ENCODE measurements at regions of chr19 and their contacts with region 1.

Region 1: GRCh38 chr19:7293795-7294570 is at the start of gene INSR:
- DNase-seq: peak; percentile 62 to 95
- H3K4me3 ChIP-seq: peak within 1 kb of the TSS; percentile 94 to 99
- H3K27ac ChIP-seq: peak within 1 kb of the TSS; percentile 95 to 96
- H3K4me1 ChIP-seq: peaks cover 5% of the 10 kb centered on the region in 2 donors
- H3K27me3 ChIP-seq: no peaks in the 10 kb centered on the region
- CTCF ChIP-seq: no peak
- total RNA-seq, gene INSR: 39.3 TPM

Region 2: DNA sequence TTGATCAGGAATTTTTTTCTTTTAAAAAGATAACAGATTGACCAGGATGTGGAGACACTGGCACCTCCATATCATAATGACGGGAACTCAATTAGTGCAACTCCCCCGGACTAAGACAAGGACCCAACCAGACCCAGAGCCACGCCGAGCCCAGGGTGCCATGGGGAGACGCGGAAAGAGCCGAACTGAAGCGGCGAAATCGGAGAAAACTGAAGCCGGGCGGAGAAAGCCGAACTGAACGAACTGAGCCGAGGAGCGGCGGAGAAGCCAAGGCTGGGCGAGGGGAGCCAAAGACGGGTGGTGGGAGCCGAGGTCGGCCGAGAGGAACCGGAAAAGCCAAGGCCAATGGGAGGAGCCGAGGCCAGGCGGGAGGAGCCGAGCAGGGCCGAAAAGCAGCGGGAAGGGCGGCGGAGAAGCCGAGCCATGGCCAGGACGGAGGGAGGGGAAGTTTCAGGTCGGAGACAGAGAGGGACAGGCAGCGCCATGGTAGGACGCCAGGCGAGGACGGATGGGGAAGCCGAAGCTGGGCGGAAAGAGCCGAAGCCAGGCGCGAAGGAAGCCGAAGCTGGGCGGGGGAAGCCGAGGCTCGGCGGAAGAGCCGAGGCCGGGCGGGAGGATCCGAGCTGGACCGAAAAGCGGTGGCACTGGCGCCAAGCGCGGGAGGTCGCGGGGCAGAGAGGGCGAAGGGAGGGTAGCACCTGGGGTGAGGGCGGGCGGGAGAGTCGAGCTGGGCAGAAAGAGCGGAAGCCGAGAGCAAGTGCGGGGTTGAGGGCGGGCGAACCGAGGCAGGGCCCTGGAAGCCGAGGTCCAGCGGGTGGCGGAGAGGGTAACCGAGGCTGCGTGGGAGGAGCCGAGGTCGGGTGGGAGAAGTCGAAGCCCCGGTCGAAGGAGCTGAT is 195.0 kb before region 1 on chr19:
- intact Hi-C with region 1: loop called (anchors 1 kb)
- DNase-seq: peak; percentile 59 to 92
- H3K4me3 ChIP-seq: peak overlapping the region; percentile 67 to 70
- H3K27ac ChIP-seq: peak overlapping the region; percentile 89 to 91
- H3K4me1 ChIP-seq: peaks cover 0 to 2% of the 10 kb centered on the region in 2 donors
- H3K27me3 ChIP-seq: no peaks in the 10 kb centered on the region
- CTCF ChIP-seq: no peak

Region 3: DNA sequence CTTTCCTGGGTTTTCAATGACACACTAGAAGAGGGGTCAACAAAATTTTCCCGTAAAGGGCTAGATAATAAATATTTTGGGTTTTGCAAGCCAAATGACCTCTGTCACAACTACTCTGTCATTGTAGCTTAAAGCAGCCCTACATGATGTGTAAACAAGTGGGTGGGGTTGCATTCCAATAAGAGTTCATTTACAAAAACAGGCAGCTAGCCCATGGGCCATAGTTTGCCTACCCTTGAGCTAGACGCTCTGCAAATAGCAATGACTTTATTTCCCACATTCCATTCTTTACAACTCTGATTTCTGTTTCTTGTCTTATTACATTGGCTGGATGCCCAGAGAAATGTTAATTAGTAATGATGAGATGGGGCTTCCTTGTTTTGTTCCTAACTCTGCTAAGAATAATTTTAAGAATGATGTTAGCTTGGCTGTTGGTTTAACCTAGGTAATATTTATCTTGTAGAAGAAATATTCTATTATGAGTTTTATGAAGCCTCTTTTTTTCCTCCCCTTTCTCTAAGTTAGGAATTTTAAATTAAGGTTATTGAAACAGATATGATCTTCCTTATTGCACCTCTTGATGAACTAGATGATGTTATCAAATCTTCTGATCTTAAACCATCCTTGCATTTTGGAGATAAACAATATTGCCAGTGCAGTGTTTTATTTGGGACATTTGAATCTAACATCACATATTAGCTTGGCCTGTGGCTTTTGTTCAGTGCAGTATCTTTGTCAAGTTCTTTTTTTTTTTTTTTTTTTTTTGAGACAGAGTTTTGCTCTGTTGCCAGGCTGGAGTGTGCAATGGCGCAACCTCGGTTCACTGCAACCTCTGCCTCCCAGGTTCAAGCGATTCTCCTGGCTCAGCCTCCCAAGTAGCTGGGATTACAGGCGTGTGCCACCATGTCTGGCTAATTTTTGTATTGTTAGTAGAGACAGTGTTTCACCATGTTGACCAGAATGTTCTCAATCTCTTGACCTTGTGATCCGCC is 148.2 kb before region 1 on chr19:
- intact Hi-C with region 1: loop called (anchors 2 kb)
- DNase-seq: no peak
- H3K4me3 ChIP-seq: no peak overlapping the region
- H3K27ac ChIP-seq: no peak overlapping the region
- H3K4me1 ChIP-seq: no peaks in the 10 kb centered on the region
- H3K27me3 ChIP-seq: no peaks in the 10 kb centered on the region
- CTCF ChIP-seq: no peak

Region 4: DNA sequence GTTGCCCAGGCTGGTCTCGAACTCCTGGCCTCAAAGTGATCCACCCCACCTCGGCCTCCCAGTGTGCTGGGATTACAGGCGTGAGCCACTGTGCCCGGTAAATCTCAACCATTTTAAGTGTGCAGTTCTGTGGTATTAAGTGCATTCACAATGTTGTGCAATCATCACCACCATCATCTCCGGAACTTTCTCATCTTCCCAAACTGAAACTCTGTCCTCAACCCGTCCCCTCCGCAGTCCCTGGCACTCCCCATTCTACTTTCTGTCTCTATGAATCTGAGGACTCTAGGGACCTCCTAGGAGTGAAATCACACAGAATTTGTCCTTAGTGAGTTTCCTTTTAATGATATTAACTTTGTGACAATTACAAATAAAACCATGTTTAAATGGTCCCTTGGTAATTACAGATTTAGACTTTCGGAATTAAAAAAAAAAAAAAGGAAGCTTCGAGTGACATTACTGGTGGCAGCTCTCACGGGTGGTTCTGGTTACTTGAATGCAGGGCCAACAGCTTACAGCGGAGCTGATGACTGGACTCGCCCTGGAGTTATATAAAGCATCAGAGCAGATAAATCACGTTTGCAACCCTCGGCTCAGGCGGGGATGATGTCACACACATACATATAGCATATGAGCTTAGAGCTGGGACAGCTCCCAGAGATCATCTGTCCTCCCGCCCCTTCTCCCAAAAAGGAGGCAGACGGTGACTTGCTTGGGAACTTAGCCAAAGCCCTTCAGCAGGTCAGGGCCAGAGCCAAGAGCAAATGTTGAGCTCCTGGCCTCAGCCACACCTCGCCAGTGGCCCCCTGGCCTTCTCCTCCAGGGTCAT is 134.7 kb before region 1 on chr19:
- intact Hi-C with region 1: loop called (anchors 2 kb)
- DNase-seq: peak; percentile 89 to 94
- H3K4me3 ChIP-seq: no peak overlapping the region
- H3K27ac ChIP-seq: peak overlapping the region; percentile 87 to 89
- H3K4me1 ChIP-seq: peaks cover 0 to 10% of the 10 kb centered on the region in 2 donors
- H3K27me3 ChIP-seq: no peaks in the 10 kb centered on the region
- CTCF ChIP-seq: no peak

Region 5: DNA sequence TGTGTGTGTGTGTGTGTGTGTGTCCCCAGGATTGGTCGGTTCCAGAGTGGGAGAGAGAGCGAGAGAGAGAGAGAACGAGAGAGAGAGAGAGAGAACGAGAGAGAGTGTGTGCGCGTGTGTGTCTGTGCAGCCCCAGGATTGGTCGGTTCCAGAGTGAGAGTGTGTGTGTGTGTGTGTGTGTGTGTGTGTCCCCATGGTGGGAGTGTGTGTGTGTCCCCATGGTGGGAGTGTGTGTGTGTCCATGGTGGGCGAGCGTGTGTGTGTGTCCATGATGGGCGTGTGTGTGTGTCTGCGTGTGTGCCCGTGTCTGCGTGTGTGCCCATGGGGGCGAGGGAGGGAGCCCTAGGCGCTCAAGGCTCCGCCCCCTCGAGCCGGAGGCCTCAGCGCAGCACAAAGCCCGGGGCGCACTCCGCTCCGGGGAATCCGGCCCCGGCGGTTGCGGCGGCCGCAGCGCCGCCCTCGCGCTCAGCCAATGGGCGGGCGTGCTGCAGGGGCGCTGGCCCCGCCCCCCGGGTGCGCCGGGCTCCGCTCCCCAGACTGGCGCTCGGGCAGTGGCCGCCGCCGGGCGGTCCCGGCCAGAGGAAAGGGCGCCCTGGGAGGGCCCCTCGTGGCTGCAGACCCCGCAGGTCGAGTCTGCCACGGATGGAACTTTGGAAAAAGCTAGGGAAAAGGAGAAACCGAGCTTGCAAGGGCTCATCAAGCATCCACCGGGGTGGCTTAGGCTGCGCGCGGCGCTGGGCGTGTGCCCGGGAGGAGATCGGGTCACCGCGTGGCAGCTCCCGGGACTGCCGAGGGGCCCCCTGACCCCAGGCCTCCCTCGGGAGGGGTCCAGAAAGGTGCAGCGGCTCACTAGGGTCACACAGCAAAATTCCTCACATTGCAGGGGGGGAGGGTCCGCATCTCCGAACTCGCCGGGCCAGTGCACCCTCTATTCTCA is 96.0 kb before region 1 on chr19:
- intact Hi-C with region 1: loop called (anchors 1 kb)
- DNase-seq: peak; percentile 77 to 96
- H3K4me3 ChIP-seq: peak overlapping the region; percentile 81 to 83
- H3K27ac ChIP-seq: peak overlapping the region; percentile 93 to 94
- H3K4me1 ChIP-seq: peaks cover 4 to 9% of the 10 kb centered on the region in 2 donors
- H3K27me3 ChIP-seq: no peaks in the 10 kb centered on the region
- CTCF ChIP-seq: peak; percentile 12 to 40 (median 32)

Region 6: DNA sequence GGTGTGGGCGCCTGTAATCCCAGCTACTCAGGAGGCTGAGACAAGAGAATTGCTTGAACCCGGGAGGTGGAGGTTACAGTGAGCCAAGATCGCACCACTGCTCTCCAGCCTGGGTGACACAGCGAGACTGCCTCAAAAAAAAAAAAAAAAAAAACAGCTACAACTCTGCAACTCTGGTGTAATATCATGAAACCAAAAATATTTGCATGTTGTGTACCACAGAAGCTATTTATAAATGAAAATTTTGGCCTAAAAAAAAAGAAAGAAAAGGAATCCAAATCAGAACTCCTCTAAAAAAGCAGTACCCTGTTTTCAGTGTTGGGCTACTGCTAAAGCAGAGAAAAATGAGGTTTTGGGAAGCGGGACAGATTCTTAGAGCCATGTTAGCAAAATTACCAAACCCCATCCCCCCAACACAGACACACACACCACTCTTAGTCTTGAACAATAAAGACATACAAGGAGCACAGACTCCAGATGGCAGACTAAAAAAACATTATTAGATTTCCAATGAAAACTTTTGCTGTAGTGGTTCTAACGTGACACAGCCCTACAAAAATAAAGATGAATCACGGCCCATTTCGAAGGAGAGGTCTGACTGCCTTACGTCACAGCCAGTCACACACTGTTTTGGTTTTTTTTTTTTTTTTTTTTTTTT is 51.3 kb before region 1 on chr19:
- intact Hi-C with region 1: loop called (anchors 2 kb)
- DNase-seq: peak in 1 of 2 donors; percentile 79
- H3K4me3 ChIP-seq: peak overlapping the region in 1 of 2 donors; percentile 6
- H3K27ac ChIP-seq: peak overlapping the region; percentile 80 to 92
- H3K4me1 ChIP-seq: peaks cover 0 to 35% of the 10 kb centered on the region in 2 donors
- H3K27me3 ChIP-seq: no peaks in the 10 kb centered on the region
- CTCF ChIP-seq: no peak

Region 7: GRCh38 chr19:7257148-7258034 is 36.6 kb before region 1 on chr19:
- intact Hi-C with region 1: no loop called
- DNase-seq: no peak
- H3K4me3 ChIP-seq: no peak overlapping the region
- H3K27ac ChIP-seq: no peak overlapping the region
- H3K4me1 ChIP-seq: peaks cover 0 to 19% of the 10 kb centered on the region in 2 donors
- H3K27me3 ChIP-seq: no peaks in the 10 kb centered on the region
- CTCF ChIP-seq: no peak

Region 8: GRCh38 chr19:7340959-7341837 is 47.2 kb after region 1 on chr19:
- intact Hi-C with region 1: loop called (anchors 2 kb)
- DNase-seq: peak in 1 of 2 donors; percentile 86
- H3K4me3 ChIP-seq: no peak overlapping the region
- H3K27ac ChIP-seq: no peak overlapping the region
- H3K4me1 ChIP-seq: peaks cover 0 to 5% of the 10 kb centered on the region in 2 donors
- H3K27me3 ChIP-seq: no peaks in the 10 kb centered on the region
- CTCF ChIP-seq: peak; percentile 87 to 96 (median 91)

Region 9: DNA sequence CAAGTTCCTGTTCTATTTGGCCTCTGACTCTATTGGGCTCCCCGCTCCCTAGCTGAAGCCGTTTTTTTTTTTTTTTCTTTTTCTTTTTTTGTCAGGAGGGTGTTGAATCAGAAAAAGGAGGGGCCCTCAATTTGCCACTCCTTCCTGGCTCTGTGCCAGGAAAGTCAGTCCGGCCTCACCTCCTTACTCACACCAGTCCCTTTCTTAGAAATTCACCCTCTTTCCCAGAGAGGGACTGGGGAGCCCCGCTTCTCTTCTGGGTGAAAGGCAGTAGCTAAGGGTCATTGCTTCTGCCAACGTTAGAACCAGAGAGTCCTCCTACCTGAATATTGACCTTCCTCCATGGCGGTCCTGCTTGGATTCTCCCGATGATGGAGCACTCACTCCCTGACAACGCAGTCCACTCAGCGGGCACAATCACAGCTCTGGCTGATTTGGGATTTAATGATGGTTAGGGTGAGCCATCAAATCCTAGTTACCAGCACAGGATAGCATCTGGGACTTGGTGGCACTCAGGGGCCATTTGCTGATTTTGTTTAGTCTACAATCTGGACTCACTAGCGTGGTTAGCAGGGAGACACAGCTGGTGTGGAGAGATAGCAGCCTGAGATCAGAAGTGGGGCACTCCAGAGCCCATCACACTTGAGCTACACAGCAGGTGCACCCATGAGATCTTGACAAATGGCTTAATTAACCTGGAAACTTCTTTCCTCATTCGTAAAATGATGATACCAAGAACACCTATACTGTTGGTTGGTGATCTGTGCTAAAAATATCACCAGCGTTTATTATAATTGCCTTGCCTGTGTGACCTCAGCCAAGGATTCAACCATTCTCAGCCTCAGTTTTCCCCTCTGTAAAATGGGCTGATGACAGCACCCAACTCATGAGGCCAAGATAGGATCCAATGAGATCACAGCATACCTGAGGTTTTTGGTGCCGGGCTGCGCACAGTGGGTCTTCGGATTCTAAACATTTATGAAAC is 405.7 kb after region 1 on chr19:
- intact Hi-C with region 1: no loop called
- DNase-seq: no peak
- H3K4me3 ChIP-seq: no peak overlapping the region
- H3K27ac ChIP-seq: no peak overlapping the region
- H3K4me1 ChIP-seq: no peaks in the 10 kb centered on the region
- H3K27me3 ChIP-seq: no peaks in the 10 kb centered on the region
- CTCF ChIP-seq: no peak